Activated T-helper 1 cell treated with anti-CD3 and anti-CD28 coated beads, Interleukin-12 subunit alpha, Interleukin-12 subunit beta, Interleukin-2, Interleukin-4 antibody, amounts not matched to agents 30 ng/mL and 10 ng/mL and 1 ng/mL, durations not matched to agents 14 hours and 24 hours and 36 hours (primary cell): ENCODE measurements at regions of chr17 and their contacts with region 1.

Region 1: GRCh38 chr17:66165513-66166123 is 26.3 kb downstream of the CEP112 start:
- DNase-seq: peak; percentile 4
- H3K4me3 Mint-ChIP-seq: no peak overlapping the region
- H3K27ac Mint-ChIP-seq: no peak overlapping the region
- H3K4me1 Mint-ChIP-seq: no peaks in the 10 kb centered on the region
- H3K27me3 Mint-ChIP-seq: no peaks in the 10 kb centered on the region

Region 2: DNA sequence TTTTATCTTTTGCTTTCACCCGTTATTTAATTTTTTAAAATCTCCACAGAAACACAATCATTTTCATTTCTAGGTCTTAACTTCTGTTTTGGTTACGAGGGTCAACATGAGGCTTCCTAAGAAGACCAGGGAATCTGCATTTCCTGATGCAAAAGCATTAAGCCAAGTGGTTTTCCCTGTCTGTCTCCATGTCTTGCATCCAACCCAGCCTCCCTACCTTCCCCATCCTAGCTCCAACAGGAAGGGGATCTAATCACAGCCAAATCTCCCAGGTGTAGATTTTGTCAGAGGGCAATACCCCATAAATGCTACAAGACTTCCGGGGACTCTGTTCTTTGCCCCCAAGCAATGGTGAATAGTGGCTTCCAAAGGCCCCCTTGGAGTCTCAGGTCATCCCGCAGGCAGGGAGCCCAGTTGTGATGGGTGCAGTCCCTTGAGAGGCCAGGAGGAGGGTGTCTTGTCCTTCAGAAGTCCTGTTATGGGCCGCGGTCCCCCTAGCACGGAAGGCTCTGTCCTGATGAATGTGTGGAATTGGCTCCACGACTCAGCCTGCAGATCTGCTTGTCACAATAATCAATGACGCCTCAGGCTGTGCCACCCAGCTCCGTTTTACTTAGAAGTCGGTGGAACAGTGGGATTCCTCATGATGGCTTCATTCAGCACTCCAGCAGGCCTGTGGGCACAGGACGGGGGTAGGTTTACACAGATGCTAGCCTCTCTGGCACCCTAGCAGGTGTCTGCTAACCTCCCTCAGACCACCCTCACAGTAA is 887.4 kb before region 1 on chr17:
- intact Hi-C with region 1: loop called (anchors 1 kb)
- DNase-seq: no peak
- H3K4me3 Mint-ChIP-seq: no peak overlapping the region
- H3K27ac Mint-ChIP-seq: no peak overlapping the region
- H3K4me1 Mint-ChIP-seq: peaks cover 11% of the 10 kb centered on the region
- H3K27me3 Mint-ChIP-seq: peaks cover 25% of the 10 kb centered on the region

Region 3: GRCh38 chr17:66135896-66136295 is 29.7 kb before region 1 on chr17:
- intact Hi-C with region 1: no loop called
- DNase-seq: no peak
- H3K4me3 Mint-ChIP-seq: no peak overlapping the region
- H3K27ac Mint-ChIP-seq: no peak overlapping the region
- H3K4me1 Mint-ChIP-seq: peaks cover 6% of the 10 kb centered on the region
- H3K27me3 Mint-ChIP-seq: peaks cover 9% of the 10 kb centered on the region